Heart right ventricle (tissue), 16 donors: ENCODE measurements at regions of chr22 and their contacts with region 1.

Region 1: GRCh38 chr22:37817705-37818408 is 5.3 kb upstream of the GALR3 start:
- DNase-seq: peak; percentile 82 to 87
- ATAC-seq: peak; percentile 89 to 96 (median 95)
- H3K4me3 ChIP-seq: peak overlapping the region in 9 of 10 donors; percentile 28 to 56 (median 45)
- H3K27ac ChIP-seq: peak overlapping the region in 9 of 10 donors; percentile 42 to 78 (median 63)
- H3K4me1 ChIP-seq: peaks cover 4 to 22% (median 18%) of the 10 kb centered on the region in 9 donors
- H3K27me3 ChIP-seq: peaks cover 0 to 40% (median 31%) of the 10 kb centered on the region in 7 donors
- CTCF ChIP-seq: peak; percentile 95 to 99 (median 98)

Region 2: DNA sequence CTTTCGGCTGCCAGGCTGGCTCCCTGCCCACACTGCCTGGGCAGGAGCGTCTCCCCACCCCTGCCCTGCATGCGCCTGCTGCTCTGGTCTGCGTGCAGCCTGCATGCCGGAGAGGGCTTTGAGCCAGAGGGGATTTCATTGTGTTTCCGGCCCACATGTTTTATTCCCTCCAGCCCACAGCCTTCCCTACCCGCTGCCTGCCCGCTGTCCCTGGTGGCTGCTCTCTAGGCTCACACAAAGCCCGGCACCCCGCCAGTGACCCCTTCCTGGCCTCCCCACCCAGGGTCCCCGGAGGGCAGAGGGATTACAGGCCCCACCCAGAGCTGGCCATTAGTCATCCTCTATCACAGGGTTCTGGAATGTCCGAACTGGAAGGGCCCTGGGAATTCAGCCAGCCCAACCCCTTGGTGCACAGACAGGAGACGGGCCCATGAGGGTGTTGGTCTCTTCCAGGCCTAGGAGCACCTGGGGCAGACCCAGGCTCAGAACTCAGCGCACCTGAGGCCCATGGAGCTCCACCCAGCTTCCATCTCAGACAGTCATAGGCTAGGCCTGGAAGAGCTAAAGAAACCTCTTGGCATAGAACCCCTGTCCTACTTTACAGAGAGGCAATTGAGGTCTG is 65.3 kb before region 1 on chr22:
- intact Hi-C with region 1: no loop called
- DNase-seq: peak; percentile 92 to 94
- ATAC-seq: peak; percentile 69 to 89 (median 84)
- H3K4me3 ChIP-seq: peak overlapping the region in 3 of 10 donors; percentile 1 to 11 (median 11)
- H3K27ac ChIP-seq: peak overlapping the region; percentile 86 to 100 (median 99)
- H3K4me1 ChIP-seq: peaks cover 51 to 77% (median 70%) of the 10 kb centered on the region in 9 donors
- H3K27me3 ChIP-seq: no peaks in the 10 kb centered on the region
- CTCF ChIP-seq: peak in 6 of 9 donors; percentile 6 to 35 (median 16)

Region 3: GRCh38 chr22:37768273-37768672 is 49.6 kb before region 1 on chr22:
- intact Hi-C with region 1: no loop called
- DNase-seq: no peak
- ATAC-seq: no peak
- H3K4me3 ChIP-seq: no peak overlapping the region
- H3K27ac ChIP-seq: no peak overlapping the region
- H3K4me1 ChIP-seq: peaks cover 0 to 18% (median 8%) of the 10 kb centered on the region in 9 donors
- H3K27me3 ChIP-seq: no peaks in the 10 kb centered on the region
- CTCF ChIP-seq: peak in 1 of 9 donors; percentile 29

Region 4: DNA sequence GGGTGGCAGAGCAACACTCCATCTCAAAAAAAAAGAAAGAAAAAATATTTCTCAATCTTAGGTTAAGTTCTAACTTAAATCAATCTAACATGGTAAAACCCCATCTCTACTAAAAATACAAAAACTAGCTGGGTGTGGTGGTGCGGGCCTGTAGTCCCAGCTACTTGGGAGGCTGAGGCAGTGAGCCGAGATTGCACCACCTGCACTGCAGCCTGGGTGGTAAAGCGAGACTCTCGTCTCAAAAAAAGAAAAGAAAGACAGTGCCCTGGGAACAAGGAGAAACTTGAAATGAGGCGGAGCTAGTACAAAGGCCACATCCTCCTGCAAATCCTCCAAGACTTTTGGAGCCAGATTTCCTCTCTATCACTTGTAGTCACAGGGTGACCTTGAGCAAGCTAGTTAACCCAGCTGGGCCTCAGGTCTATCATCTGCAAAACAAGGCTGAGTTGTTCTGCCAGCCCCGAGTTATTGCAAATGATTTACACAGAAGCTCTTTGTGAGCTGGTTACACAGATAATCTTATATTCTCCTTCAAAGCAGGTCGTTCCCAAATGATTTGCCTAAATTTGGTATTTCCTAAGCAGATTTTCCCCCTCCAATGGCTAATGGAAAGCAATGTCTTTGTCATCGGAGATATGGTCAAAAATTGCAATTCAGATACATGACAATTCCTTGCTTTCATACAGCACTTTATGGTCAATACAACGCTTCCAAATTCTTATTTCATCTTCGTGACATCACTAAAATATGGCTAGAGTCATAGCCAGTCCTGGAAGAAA is 24.3 kb after region 1 on chr22:
- intact Hi-C with region 1: no loop called
- DNase-seq: no peak
- ATAC-seq: no peak
- H3K4me3 ChIP-seq: no peak overlapping the region
- H3K27ac ChIP-seq: no peak overlapping the region
- H3K4me1 ChIP-seq: peaks cover 2 to 22% (median 18%) of the 10 kb centered on the region in 9 donors
- H3K27me3 ChIP-seq: no peaks in the 10 kb centered on the region
- CTCF ChIP-seq: no peak

Region 5: DNA sequence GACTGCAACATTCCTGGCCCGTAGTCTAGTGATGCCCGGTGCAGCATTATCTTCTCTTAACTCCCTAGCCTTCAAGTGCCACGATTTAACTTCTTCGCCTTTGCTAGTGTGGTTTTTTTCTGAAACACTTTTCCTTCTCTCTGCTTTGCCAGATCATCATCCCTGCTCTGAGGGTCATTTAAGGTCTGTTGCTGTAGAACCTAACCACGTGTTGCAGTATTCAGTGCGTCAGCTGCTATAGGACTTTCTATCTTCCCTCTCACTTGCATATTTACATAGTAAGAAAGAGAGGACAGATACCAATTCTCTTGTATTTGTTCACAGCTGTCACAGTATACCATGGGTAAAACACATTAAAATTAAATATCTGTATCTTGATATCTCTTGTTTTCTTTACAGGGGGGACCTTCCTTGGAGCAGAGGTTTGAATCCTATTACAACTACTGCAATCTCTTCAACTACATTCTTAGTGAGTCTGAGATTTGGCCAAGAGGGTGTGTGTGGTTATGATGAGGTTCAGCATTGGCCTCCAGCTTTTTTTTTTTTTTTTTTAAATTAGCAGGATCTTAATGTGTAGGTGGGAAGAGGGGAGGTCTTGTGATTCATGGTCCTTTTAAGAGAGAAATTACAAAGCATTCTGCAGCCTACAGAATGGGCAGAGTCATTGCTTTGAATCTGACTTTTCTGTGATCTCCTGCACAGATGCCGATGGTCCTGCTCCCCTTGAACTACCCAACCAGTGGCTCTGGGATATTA is 44.9 kb after region 1 on chr22:
- intact Hi-C with region 1: loop called (anchors 1 to 5 kb)
- DNase-seq: no peak
- ATAC-seq: peak in 7 of 8 donors; percentile 13 to 52 (median 37)
- H3K4me3 ChIP-seq: no peak overlapping the region
- H3K27ac ChIP-seq: peak overlapping the region in 8 of 10 donors; percentile 1 to 49 (median 37)
- H3K4me1 ChIP-seq: peaks cover 0 to 41% (median 17%) of the 10 kb centered on the region in 9 donors
- H3K27me3 ChIP-seq: no peaks in the 10 kb centered on the region
- CTCF ChIP-seq: no peak

Region 6: GRCh38 chr22:37933711-37934376 is 116.0 kb after region 1 on chr22:
- intact Hi-C with region 1: loop called in 2 of 10 experiments (anchors 10 kb)
- DNase-seq: peak; percentile 89 to 90
- ATAC-seq: peak; percentile 94 to 98 (median 97)
- H3K4me3 ChIP-seq: no peak overlapping the region
- H3K27ac ChIP-seq: peak overlapping the region in 9 of 10 donors; percentile 31 to 80 (median 57)
- H3K4me1 ChIP-seq: peaks cover 7 to 46% (median 30%) of the 10 kb centered on the region in 9 donors
- H3K27me3 ChIP-seq: no peaks in the 10 kb centered on the region
- CTCF ChIP-seq: peak; percentile 90 to 100 (median 98)

Region 7: GRCh38 chr22:37965940-37966664 is 148.2 kb after region 1 on chr22:
- intact Hi-C with region 1: loop called in 9 of 10 experiments (anchors 2 to 10 kb)
- DNase-seq: no peak
- ATAC-seq: peak in 4 of 8 donors; percentile 54 to 69 (median 56)
- H3K4me3 ChIP-seq: no peak overlapping the region
- H3K27ac ChIP-seq: peak overlapping the region in 6 of 10 donors; percentile 8 to 70 (median 44)
- H3K4me1 ChIP-seq: peaks cover 0 to 25% (median 12%) of the 10 kb centered on the region in 9 donors
- H3K27me3 ChIP-seq: no peaks in the 10 kb centered on the region
- CTCF ChIP-seq: no peak

Region 8: DNA sequence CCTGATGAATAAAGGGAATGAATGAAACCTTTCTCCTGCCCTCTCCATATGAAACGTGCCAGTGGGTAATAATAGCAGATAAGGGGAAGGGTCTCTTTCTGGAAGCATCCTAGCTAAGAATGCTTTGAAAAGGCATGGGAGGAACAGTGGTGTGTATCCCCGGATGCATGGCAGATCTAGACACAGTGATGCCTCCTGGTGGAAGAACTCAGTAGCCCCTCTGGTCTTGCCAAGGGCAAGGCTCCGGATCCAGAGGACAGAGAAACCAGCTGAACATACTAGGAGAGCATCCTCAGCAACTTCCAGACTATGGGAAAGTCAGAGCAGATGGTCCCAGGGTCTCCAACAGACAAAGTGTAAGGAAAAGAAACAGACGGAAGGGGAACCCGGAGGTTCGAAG is 286.2 kb after region 1 on chr22:
- intact Hi-C with region 1: no loop called
- DNase-seq: no peak
- ATAC-seq: peak in 1 of 8 donors; percentile 44
- H3K4me3 ChIP-seq: no peak overlapping the region
- H3K27ac ChIP-seq: no peak overlapping the region
- H3K4me1 ChIP-seq: peaks cover 0 to 11% (median 0%) of the 10 kb centered on the region in 9 donors
- H3K27me3 ChIP-seq: no peaks in the 10 kb centered on the region
- CTCF ChIP-seq: peak in 7 of 9 donors; percentile 22 to 40 (median 31)